ENCODE measurements at regions of chr19 and their contacts with region 1.

Region 1: DNA sequence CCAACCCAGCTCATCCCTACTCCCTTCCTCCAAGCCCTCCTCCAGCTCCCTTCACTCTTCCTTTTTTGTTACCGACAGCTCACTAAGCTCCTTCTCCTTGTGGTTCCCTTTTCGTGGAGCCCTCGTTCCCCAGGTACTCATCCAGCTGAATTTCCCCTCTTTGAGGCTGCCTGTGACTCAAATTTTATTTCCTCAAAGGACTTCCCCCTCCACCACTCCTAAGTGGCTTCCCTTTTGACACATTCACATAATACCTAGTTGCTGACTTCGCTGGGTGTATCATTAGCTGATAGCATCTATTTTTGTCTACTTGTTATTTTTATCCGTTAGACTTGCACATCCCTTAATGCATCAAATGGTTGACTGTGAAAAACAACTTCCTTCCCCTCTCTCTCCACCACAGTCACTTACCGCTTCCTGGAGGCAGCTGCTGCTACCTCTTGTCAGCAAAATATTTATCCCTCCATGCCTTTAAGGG is 14.5 kb downstream of the FFAR2 start:
- H3K4me3 Mint-ChIP-seq: no peak overlapping the region
- H3K27ac Mint-ChIP-seq: peak overlapping the region; percentile 66
- H3K4me1 Mint-ChIP-seq: peaks cover 54% of the 10 kb centered on the region
- H3K27me3 Mint-ChIP-seq: peaks cover 41% of the 10 kb centered on the region

Region 2: DNA sequence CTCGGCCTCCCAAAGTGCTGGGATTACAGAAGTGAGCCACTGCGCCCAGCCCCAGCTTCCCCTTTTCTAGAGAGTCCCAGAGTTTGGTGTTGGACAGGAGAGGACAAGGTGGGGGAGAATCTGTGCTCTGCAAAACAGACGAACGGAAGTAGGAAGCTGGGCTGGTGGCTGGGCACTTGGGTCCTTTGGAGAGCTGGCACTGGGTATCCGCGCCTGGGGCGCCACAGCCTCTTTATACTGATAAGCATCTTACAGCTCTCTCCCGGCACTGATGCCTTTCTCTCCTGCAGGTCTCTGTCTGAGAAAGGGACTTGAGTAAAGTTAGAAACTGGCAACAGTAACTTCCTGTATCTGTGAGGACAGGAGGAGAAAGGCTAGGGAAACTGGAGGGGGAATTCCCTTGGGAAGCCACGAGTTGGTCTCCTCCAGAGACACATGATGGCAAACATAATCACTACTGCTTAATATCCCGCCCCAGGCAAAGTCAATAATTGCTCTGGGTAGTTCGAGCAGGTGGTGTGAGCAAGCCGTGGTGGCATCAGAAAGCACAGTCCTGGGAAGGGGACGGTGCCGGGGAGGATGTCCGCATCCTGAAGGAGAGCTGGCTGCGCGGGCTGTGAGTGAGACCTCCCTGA is 13.3 kb before region 1 on chr19:
- intact Hi-C with region 1: loop called (anchors 2 kb)
- H3K4me3 Mint-ChIP-seq: peak overlapping the region; percentile 18
- H3K27ac Mint-ChIP-seq: peak overlapping the region; percentile 87
- H3K4me1 Mint-ChIP-seq: peaks cover 73% of the 10 kb centered on the region
- H3K27me3 Mint-ChIP-seq: peaks cover 25% of the 10 kb centered on the region

Region 3: DNA sequence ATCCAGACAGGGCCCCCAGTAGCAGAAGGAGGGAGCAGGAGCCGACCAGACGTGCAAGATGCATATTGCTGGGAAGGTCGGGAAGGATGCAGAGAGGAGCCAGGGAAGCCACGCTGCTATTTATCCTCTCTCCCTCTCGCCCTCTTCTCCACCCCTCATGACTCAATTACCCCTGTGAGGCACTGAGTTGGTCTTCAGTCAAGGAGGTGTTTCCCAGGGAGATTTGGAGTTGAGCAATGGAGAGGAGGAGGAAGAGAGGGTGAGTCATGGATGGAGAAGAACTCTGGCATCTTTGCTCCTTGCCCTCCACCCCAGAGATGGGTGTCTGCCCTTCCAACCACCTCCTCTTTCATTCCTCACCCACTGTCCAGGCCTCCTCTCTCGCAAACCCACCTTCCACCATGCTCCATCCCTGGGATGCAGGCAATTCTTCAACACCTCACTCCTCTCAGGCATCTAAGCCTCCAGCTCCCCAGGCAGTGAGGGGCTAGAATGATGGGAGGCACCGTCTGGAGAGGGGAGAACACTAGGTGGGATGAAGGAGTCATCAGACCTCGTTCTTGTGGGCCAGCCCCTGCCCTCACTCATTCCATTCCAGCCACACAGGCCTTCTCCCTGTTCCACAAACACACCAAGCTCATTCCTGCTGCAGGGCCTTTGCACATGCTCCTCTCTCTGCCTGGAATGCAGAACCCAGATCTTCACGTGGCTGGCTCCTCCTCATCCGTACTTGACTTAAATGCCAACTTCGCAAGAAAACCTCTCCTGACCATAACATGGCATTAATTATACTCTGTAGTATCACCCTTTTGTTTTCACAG is 65.9 kb after region 1 on chr19 and contains the start of gene SBSN:
- intact Hi-C with region 1: no loop called
- H3K4me3 Mint-ChIP-seq: no peak within 1 kb of the TSS
- H3K27ac Mint-ChIP-seq: no peak within 1 kb of the TSS
- H3K4me1 Mint-ChIP-seq: peaks cover 13% of the 10 kb centered on the region
- H3K27me3 Mint-ChIP-seq: peaks cover 45% of the 10 kb centered on the region